ENCODE measurements at regions of chr13 and their contacts with region 1.

Region 1: GRCh38 chr13:48975856-48976575 is at the start of gene FNDC3A:
- DNase-seq: peak; percentile 88 to 92 (median 89)
- H3K4me3 ChIP-seq: peak within 1 kb of the TSS; percentile 81 to 83
- H3K4me3 Mint-ChIP-seq: peak within 1 kb of the TSS; percentile 94 to 98 (median 96)
- H3K27ac ChIP-seq: peak within 1 kb of the TSS; percentile 90
- H3K27ac Mint-ChIP-seq: peak within 1 kb of the TSS; percentile 90 to 99 (median 99)
- H3K4me1 ChIP-seq: peaks cover 51% of the 10 kb centered on the region
- H3K4me1 Mint-ChIP-seq: peaks cover 28 to 55% (median 40%) of the 10 kb centered on the region in 4 donors
- H3K27me3 ChIP-seq: no peaks in the 10 kb centered on the region
- H3K27me3 Mint-ChIP-seq: peaks cover 0 to 3% of the 10 kb centered on the region in 2 donors
- total RNA-seq, gene FNDC3A: 43.7 to 44.4 TPM

Region 2: DNA sequence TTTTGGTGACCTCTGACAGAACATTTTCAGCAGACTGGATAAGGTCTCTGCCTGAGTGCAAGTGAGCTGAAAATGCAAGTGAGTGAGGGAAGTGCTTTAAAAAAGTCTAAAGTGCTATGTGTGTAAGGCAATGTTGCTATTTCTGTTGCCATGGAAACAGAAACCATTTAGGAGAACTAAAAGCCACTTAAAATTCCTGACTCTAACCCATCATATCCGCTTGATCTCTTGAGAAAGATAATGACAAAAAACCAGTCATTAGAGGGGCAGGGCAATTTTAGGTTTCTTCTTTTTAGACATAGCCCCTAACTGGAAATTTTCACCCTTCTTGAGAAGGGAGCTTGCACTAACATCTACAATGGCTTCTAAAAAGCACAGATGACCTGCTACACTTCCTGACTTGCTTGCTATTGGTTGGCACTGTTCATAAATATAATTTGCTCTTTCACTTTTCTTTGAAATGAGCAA is 322.5 kb before region 1 on chr13 and contains the start of gene CYSLTR2:
- CTCF ChIA-PET with region 1: no interaction called
- POLR2A ChIA-PET with region 1: no interaction called
- intact Hi-C with region 1: loop called (anchors 1 kb)
- DNase-seq: peak; percentile 69 to 89 (median 86)
- H3K4me3 ChIP-seq: peak within 1 kb of the TSS; percentile 30 to 55
- H3K4me3 Mint-ChIP-seq: peak within 1 kb of the TSS; percentile 81 to 90 (median 89)
- H3K27ac ChIP-seq: peak within 1 kb of the TSS; percentile 69
- H3K27ac Mint-ChIP-seq: peak within 1 kb of the TSS; percentile 88 to 98 (median 95)
- H3K4me1 ChIP-seq: peaks cover 51% of the 10 kb centered on the region
- H3K4me1 Mint-ChIP-seq: peaks cover 27 to 53% (median 43%) of the 10 kb centered on the region in 4 donors
- H3K27me3 ChIP-seq: no peaks in the 10 kb centered on the region
- H3K27me3 Mint-ChIP-seq: no peaks in the 10 kb centered on the region
- total RNA-seq, gene CYSLTR2: 3.3 to 3.7 TPM

Region 3: DNA sequence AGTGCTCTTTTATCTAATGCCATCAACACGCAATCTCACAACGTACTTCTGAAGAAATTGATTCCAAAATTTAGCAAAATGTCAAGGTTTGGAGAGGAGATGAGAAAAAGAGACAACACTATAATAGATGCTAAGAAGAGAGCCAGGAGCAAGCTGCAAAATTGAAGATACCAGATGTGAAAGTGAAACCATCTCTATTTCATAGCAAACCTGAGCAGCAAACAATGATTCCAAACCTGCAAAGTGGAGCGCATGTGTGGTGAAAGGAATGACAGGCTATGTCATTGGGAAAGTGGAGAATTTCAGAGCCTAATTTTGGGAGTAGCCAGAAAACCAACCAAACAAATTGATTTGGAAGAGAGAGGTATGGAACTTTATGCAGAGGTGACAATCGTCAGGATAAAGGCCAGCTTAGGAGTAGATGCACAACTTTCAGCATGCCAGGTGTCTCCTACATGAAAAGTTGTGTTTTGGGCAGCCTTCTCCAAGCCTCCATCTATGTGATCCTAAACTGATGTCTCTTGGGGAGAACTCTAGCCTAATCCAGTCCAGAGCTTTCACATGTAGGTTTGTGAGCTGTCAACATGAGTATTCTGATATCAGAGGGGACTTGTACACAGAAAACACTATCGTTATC is 158.7 kb before region 1 on chr13:
- CTCF ChIA-PET with region 1: no interaction called
- POLR2A ChIA-PET with region 1: interaction called, 12 read pairs
- intact Hi-C with region 1: no loop called
- DNase-seq: peak in 3 of 5 donors; percentile 22 to 30 (median 25)
- H3K4me3 ChIP-seq: peak overlapping the region; percentile 20 to 39
- H3K4me3 Mint-ChIP-seq: peak overlapping the region; percentile 64 to 89 (median 83)
- H3K27ac ChIP-seq: peak overlapping the region; percentile 19
- H3K27ac Mint-ChIP-seq: peak overlapping the region; percentile 9 to 94 (median 82)
- H3K4me1 ChIP-seq: peaks cover 15% of the 10 kb centered on the region
- H3K4me1 Mint-ChIP-seq: peaks cover 9 to 26% (median 16%) of the 10 kb centered on the region in 4 donors
- H3K27me3 ChIP-seq: no peaks in the 10 kb centered on the region
- H3K27me3 Mint-ChIP-seq: peaks cover 0 to 3% of the 10 kb centered on the region in 2 donors

Region 4: DNA sequence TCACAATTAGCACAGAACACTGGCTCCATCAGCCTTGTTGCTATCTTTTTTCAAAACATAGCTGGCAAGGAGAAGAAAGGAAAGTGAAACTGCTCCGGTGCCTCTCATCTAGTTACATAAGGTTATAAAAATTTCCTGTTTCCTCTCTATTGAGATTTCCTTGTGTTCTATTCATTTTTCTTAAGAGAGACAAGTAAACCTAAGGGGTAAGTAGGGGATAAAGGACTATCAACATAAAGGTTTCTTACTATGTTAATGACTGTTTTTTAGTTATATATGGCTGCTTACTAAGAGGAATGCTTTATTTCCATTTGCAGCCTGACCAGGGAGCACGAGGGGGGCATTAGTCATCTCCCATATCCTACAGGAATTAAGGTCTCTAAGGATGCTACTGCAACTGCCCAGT is 170.9 kb after region 1 on chr13:
- CTCF ChIA-PET with region 1: no interaction called
- POLR2A ChIA-PET with region 1: interaction called, 13 read pairs
- intact Hi-C with region 1: no loop called
- DNase-seq: peak; percentile 31 to 55 (median 45)
- H3K4me3 ChIP-seq: peak overlapping the region; percentile 13 to 30
- H3K4me3 Mint-ChIP-seq: peak overlapping the region; percentile 72 to 97 (median 88)
- H3K27ac ChIP-seq: peak overlapping the region; percentile 67
- H3K27ac Mint-ChIP-seq: peak overlapping the region; percentile 86 to 97 (median 94)
- H3K4me1 ChIP-seq: peaks cover 20% of the 10 kb centered on the region
- H3K4me1 Mint-ChIP-seq: peaks cover 30 to 67% (median 40%) of the 10 kb centered on the region in 4 donors
- H3K27me3 ChIP-seq: no peaks in the 10 kb centered on the region
- H3K27me3 Mint-ChIP-seq: no peaks in the 10 kb centered on the region

Region 5: DNA sequence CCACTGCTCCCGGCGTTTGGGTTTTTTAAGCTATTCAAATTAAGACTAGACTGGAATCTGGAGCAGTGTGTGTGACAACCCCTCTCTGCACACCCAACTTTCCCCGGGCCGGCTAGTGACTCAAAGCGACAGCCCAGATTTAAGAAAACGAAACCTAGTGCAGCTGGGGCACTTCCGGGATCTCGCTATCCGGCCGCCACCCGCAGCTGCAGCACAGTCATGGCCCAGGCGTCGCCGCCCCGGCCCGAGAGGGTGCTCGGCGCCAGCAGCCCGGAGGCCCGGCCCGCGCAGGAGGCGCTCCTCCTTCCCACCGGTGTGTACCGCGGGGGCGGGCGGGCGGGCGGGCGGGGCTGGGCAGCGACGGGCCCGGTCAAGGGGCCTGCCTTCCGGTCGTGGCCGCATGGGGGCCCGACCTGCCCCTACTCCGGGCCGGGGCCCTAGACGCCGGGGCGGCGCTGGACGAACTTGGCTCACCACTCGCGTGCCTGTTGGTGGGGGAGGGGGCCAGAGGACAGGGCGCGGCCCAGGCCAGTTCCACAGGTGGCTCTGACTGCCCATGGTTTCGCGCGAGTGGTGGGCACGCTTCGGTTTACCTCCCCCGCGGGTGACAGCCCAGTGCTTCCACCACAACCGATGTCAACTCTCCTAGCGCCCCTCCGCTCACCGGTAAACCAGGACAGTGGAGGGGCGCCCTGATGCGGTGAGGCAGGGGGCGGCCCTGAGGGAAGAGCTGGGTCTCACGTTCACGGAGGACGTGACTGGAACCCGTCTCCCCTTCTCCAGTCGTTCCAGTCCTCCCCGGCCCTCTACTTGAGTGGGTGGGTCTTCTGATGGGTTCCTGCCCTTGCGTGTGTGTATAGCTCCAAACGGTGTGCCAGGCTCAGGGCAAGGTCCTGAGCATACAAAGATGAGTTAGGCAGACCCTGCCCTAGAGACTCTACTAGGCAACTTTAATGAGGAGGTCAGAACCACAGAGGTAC is 520.1 kb after region 1 on chr13 and contains the start of gene PHF11:
- CTCF ChIA-PET with region 1: no interaction called
- POLR2A ChIA-PET with region 1: interaction called, 10 read pairs
- intact Hi-C with region 1: no loop called
- DNase-seq: peak; percentile 85 to 93 (median 87)
- H3K4me3 ChIP-seq: peak within 1 kb of the TSS; percentile 58 to 74
- H3K4me3 Mint-ChIP-seq: peak within 1 kb of the TSS; percentile 98 to 99 (median 98)
- H3K27ac ChIP-seq: peak within 1 kb of the TSS; percentile 94
- H3K27ac Mint-ChIP-seq: peak within 1 kb of the TSS; percentile 99
- H3K4me1 ChIP-seq: peaks cover 54% of the 10 kb centered on the region
- H3K4me1 Mint-ChIP-seq: peaks cover 40 to 64% (median 49%) of the 10 kb centered on the region in 4 donors
- H3K27me3 ChIP-seq: no peaks in the 10 kb centered on the region
- H3K27me3 Mint-ChIP-seq: no peaks in the 10 kb centered on the region
- total RNA-seq, gene PHF11: 138 to 139 TPM